ENCODE measurements at regions of chr11 and their contacts with region 1.

Region 1: DNA sequence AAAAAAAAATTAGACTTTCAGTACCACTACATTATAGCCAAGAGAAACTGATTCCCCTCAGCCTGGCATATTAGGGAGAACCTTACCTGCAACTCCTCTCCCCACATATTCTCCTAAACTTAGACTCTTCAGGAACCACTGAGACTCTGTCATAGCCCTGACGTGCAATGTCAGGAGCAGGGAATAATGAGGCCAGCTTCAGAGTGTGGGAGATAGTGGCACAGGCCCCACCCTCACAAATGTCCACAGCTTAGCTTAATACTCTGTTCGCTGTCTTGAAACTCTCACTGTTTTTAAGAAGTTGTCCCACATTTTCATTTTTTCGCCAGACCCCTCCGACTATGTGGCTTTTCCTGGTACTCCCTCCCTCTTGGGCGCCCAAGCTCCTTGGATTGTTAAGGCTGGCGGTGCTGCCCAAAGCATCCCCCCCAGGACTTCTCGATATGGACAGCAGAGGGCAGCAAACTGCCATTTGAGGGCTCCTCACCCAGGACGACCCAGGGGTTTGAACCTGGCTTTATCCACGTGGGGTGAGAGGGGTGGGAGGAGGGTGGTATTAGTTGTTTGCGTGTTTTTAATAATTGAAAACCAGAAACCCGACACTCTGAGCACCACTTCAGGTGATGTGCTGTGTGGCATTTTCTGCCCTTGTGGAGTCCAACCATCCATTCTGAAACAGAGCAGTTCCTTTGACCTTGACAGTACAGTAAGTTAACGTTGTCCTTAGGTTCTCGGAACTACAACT is 45.2 kb upstream of the RASSF10 start:
- DNase-seq: peak; percentile 58 to 80 (median 68)
- H3K4me3 ChIP-seq: no peak overlapping the region
- H3K27ac ChIP-seq: no peak overlapping the region
- H3K4me1 ChIP-seq: no peaks in the 10 kb centered on the region
- H3K27me3 ChIP-seq: peaks cover 4% of the 10 kb centered on the region
- CTCF ChIP-seq: peak; percentile 68 to 87 (median 83)
- POLR2A ChIP-seq: no peak

Region 2: DNA sequence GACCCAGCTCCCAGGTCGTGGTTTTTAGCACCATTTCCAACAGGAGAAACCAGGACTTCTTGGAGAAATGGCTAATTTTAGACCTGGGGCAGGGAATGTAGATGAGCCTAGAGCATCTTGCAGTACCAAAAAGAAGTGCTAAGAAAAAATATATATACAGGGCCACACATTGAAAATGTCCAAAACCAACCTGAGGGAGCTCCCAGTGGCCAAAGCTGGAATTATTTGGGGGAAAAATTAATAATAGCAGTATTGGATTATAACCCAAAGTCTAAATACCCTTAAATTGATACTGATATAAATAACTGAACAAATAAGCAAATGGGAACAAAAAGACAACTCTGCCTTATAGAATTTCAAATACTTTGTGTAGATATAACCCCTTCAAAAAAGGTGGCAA is 478.6 kb before region 1 on chr11:
- intact Hi-C with region 1: no loop called
- DNase-seq: no peak
- H3K4me3 ChIP-seq: no peak overlapping the region
- H3K27ac ChIP-seq: no peak overlapping the region
- H3K4me1 ChIP-seq: no peaks in the 10 kb centered on the region
- H3K27me3 ChIP-seq: no peaks in the 10 kb centered on the region
- CTCF ChIP-seq: peak; percentile 13 to 56 (median 36)
- POLR2A ChIP-seq: no peak

Region 3: GRCh38 chr11:12693479-12694181 is 270.3 kb before region 1 on chr11:
- intact Hi-C with region 1: no loop called
- DNase-seq: peak; percentile 48 to 81 (median 67)
- H3K4me3 ChIP-seq: peak overlapping the region in 1 of 4 donors; percentile 20
- H3K27ac ChIP-seq: peak overlapping the region; percentile 76 to 93 (median 91)
- H3K4me1 ChIP-seq: peaks cover 42 to 74% of the 10 kb centered on the region in 2 donors
- H3K27me3 ChIP-seq: no peaks in the 10 kb centered on the region
- CTCF ChIP-seq: no peak
- POLR2A ChIP-seq: peak in 1 of 2 donors; percentile 67

Region 4: GRCh38 chr11:12864316-12865156 is 99.4 kb before region 1 on chr11:
- intact Hi-C with region 1: no loop called
- DNase-seq: no peak
- H3K4me3 ChIP-seq: no peak overlapping the region
- H3K27ac ChIP-seq: no peak overlapping the region
- H3K4me1 ChIP-seq: peaks cover 0 to 22% of the 10 kb centered on the region in 2 donors
- H3K27me3 ChIP-seq: no peaks in the 10 kb centered on the region
- CTCF ChIP-seq: no peak
- POLR2A ChIP-seq: no peak

Region 5: GRCh38 chr11:12893787-12894672 is 69.9 kb before region 1 on chr11:
- intact Hi-C with region 1: no loop called
- DNase-seq: peak; percentile 44 to 89 (median 72)
- H3K4me3 ChIP-seq: no peak overlapping the region
- H3K27ac ChIP-seq: peak overlapping the region in 1 of 5 donors; percentile 65
- H3K4me1 ChIP-seq: peaks cover 3 to 14% of the 10 kb centered on the region in 2 donors
- H3K27me3 ChIP-seq: no peaks in the 10 kb centered on the region
- CTCF ChIP-seq: peak; percentile 80 to 93 (median 84)
- POLR2A ChIP-seq: no peak

Region 6: GRCh38 chr11:13183094-13183825 is 219.3 kb after region 1 on chr11:
- intact Hi-C with region 1: loop called (anchors 5 to 10 kb)
- DNase-seq: peak in 1 of 7 donors; percentile 25
- H3K4me3 ChIP-seq: no peak overlapping the region
- H3K27ac ChIP-seq: no peak overlapping the region
- H3K4me1 ChIP-seq: peaks cover 0 to 6% of the 10 kb centered on the region in 2 donors
- H3K27me3 ChIP-seq: no peaks in the 10 kb centered on the region
- CTCF ChIP-seq: peak in 5 of 6 experiments; percentile 34 to 55 (median 40)
- POLR2A ChIP-seq: no peak

Region 7: GRCh38 chr11:13472001-13472400 is 508.0 kb after region 1 on chr11:
- intact Hi-C with region 1: loop called in 1 of 2 experiments (anchors 5 kb)
- DNase-seq: no peak
- H3K4me3 ChIP-seq: no peak overlapping the region
- H3K27ac ChIP-seq: no peak overlapping the region
- H3K4me1 ChIP-seq: no peaks in the 10 kb centered on the region
- H3K27me3 ChIP-seq: no peaks in the 10 kb centered on the region
- CTCF ChIP-seq: no peak
- POLR2A ChIP-seq: no peak